Activated B cell treated with CpG ODN at 0.5 μM for 24 hours (primary cell): ENCODE measurements at regions of chr12 and their contacts with region 1.

Region 1: GRCh38 chr12:108803428-108804105 is 53.8 kb downstream of the SSH1 start:
- DNase-seq: no peak
- ATAC-seq: peak; percentile 87
- H3K4me3 Mint-ChIP-seq: no peak overlapping the region
- H3K27ac Mint-ChIP-seq: peak overlapping the region; percentile 56
- H3K4me1 Mint-ChIP-seq: peaks cover 21% of the 10 kb centered on the region
- H3K27me3 Mint-ChIP-seq: no peaks in the 10 kb centered on the region
- CTCF ChIP-seq: peak; percentile 93

Region 2: GRCh38 chr12:107992870-107993451 is 810.6 kb before region 1 on chr12:
- CTCF ChIA-PET with region 1: no interaction called
- POLR2A ChIA-PET with region 1: no interaction called
- intact Hi-C with region 1: loop called (anchors 5 kb)
- DNase-seq: no peak
- ATAC-seq: peak; percentile 31
- H3K4me3 Mint-ChIP-seq: no peak overlapping the region
- H3K27ac Mint-ChIP-seq: no peak overlapping the region
- H3K4me1 Mint-ChIP-seq: no peaks in the 10 kb centered on the region
- H3K27me3 Mint-ChIP-seq: peaks cover 29% of the 10 kb centered on the region
- CTCF ChIP-seq: no peak

Region 3: DNA sequence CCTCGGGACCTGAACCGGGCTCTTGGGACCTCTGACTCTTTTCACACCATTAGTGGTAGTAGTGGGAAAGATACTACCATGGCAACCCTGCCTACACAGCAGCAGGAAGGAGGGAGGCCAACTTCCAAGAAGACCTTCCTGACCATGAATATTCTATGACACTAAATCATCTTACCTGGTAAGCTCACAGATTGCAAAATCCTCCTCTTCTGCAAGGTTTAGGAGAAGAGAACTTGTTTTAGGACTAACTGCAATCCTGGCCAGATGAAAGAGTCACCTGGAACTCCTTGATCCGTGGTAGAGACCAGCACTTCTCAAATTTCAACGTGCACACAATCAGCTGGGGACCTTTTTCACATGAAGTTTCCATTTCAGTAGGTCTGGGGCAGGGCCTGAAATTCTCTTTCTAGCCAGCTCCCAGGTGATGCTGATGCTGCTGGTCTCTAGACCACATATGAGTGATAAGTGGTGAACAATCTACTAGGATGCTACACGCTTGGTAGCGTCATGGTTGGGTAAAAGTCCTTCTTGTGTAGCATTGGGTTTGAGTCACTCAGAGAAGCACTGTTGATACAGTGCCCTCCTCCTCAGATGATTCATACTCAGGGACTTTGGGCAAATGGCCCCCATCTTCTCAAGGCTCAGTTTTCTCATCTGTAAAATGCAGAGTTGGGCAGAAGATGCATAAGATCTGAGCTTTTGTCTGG is 324.1 kb before region 1 on chr12:
- CTCF ChIA-PET with region 1: no interaction called
- POLR2A ChIA-PET with region 1: no interaction called
- intact Hi-C with region 1: no loop called
- DNase-seq: no peak
- ATAC-seq: no peak
- H3K4me3 Mint-ChIP-seq: no peak overlapping the region
- H3K27ac Mint-ChIP-seq: no peak overlapping the region
- H3K4me1 Mint-ChIP-seq: no peaks in the 10 kb centered on the region
- H3K27me3 Mint-ChIP-seq: peaks cover 14% of the 10 kb centered on the region
- CTCF ChIP-seq: no peak

Region 4: DNA sequence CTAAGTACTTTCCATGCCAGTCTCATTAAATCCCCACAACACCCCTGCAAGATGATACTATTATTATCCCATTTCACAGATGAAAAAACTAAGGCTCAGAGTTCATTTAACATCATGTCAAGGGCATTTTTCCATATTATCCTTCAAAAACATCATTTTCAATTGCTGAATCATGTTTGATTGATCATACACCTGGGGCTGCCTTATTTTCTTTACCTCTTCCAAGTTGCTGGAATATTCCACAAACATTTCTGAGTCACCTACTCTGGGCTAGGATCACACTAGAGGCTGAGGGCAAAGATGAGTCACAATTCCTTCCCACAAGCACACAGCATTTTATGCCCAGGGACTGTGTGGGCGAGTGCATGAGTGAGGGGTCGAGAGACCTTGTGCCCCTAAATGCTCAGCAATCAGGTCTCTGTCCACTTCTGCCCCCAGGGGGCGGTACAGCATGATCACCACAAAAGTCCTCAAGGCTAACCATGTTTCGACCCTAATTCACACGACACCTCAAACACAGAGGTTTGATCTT is 191.6 kb before region 1 on chr12:
- CTCF ChIA-PET with region 1: interaction called, 5 read pairs
- POLR2A ChIA-PET with region 1: no interaction called
- intact Hi-C with region 1: loop called (anchors 1 kb)
- DNase-seq: no peak
- ATAC-seq: peak; percentile 21
- H3K4me3 Mint-ChIP-seq: no peak overlapping the region
- H3K27ac Mint-ChIP-seq: peak overlapping the region; percentile 24
- H3K4me1 Mint-ChIP-seq: peaks cover 52% of the 10 kb centered on the region
- H3K27me3 Mint-ChIP-seq: peaks cover 8% of the 10 kb centered on the region
- CTCF ChIP-seq: no peak

Region 5: DNA sequence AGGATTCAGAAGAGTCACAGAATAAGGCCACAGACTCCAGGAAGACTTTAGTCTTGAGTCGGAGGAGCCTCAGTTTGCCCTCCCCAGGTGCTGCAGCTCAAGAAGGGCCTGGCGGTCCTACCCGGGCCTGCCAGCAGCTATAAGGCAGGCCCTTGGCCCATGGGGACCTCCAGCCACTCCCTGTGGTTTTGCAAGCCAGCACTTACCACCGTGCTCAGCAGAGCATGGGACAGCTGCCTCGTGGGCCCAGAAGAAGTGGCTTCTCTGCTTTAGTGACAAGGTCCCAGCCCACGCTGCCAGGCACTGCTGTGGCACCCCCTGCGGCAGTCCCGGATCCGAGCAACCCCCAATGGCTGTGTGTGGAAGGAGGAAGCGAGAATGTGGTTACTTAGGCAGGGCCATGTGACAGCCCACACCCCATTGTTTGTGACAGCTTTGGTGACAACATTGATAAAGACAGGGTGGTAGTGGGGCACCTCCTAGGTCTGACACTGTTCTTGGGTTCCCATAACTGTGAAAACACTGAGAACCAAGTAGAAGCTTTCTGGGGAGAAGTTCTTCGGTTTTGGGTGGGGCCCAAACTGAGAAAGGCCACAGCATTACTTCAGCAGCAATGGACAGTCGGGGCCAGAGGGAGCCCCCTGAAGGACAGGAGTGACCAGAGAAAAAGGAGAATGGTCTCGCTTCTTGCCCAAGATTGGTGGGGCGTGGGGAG is 169.9 kb before region 1 on chr12 and contains the start of gene SELPLG:
- CTCF ChIA-PET with region 1: interaction called, 17 read pairs
- POLR2A ChIA-PET with region 1: interaction called, 3 read pairs
- intact Hi-C with region 1: no loop called
- DNase-seq: peak; percentile 79
- ATAC-seq: peak; percentile 76
- H3K4me3 Mint-ChIP-seq: peak within 1 kb of the TSS; percentile 85
- H3K27ac Mint-ChIP-seq: peak within 1 kb of the TSS; percentile 98
- H3K4me1 Mint-ChIP-seq: peaks cover 95% of the 10 kb centered on the region
- H3K27me3 Mint-ChIP-seq: no peaks in the 10 kb centered on the region
- CTCF ChIP-seq: no peak
- total RNA-seq, gene SELPLG: 1.8 and 2.0 TPM in 2 replicates

Region 6: DNA sequence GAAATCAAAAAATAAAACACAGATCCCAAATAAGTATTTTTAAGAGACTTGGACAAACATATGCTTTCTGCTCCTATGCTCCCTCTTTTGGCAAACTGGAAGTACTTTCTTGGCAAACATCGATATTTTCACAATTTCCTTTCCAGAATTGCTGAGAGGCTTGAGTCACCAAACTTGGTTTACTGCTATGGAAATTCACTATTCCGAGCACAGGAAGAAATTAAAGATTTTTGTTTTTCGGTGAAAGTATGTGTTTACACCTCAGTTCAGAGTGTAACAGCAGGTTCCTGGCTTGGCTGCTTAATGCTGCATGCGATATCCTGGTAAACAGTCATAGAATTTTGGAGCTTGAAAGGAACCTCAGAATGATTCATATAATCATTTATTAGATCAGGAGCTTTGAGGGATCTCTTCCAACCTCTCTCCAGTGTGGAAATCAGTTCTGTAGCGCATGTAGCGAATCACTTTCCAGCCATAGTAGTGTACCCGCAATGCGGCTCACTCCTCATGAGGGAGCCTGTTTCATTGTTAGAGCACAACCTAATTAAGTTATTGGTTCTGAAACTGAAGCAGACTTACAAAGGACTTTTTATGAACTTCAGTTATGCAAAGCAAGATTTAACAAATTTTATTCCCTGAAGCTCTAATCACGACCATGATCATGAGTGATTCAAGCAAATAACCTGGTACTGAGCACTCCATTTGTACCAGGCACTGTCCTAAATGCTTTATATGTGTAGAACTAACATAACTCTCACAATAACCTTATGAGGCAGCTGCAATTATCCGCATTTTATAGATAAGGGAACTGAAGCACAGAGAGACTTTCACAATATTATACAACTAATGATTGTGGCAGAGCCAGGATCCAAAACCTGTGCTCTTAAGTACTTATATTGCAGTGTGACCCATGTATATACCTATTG is 1421.1 kb after region 1 on chr12:
- CTCF ChIA-PET with region 1: no interaction called
- POLR2A ChIA-PET with region 1: no interaction called
- intact Hi-C with region 1: no loop called
- DNase-seq: no peak
- ATAC-seq: no peak
- H3K4me3 Mint-ChIP-seq: no peak overlapping the region
- H3K27ac Mint-ChIP-seq: no peak overlapping the region
- H3K4me1 Mint-ChIP-seq: no peaks in the 10 kb centered on the region
- H3K27me3 Mint-ChIP-seq: no peaks in the 10 kb centered on the region
- CTCF ChIP-seq: no peak